Posterior cingulate gyrus (tissue), 11 donors: ENCODE measurements at regions of chr16 and their contacts with region 1.

Region 1: GRCh38 chr16:57519796-57520360 is 16.5 kb downstream of the CCDC102A start:
- DNase-seq: peak; percentile 67 to 97 (median 85)

Region 2: DNA sequence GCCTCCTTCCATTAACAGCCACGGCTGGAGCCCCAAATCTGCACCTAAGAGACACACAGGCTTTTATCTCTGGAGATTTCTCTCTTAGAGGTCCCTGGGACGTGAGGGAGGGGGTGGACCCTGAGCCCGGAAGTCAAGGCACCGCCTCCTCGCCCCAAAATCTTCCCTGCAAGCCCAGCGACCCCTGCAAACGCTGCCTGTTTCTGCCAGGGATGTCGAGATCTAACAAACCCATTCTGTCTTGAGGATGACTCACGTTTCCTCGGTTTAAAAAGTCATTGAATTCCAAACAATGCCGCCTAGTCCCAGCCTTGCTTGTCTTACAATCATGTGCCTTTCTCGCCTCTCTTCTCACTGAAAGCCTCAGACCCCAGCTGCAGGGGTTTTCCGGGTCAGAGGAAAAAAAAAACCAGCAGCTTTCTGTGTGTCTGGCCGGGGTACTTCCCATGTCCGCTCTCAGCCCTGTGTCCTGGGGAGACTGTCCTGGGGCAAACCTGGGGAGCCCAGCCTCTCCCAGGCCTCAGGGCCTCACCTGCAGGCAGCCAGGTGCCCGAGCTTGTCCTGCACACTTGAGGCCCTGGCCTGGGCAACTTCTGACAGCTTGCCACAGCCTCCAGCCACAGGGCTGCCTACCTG is 259.5 kb before region 1 on chr16:
- intact Hi-C with region 1: no loop called
- DNase-seq: peak in 6 of 10 donors; percentile 33 to 92 (median 58)

Region 3: DNA sequence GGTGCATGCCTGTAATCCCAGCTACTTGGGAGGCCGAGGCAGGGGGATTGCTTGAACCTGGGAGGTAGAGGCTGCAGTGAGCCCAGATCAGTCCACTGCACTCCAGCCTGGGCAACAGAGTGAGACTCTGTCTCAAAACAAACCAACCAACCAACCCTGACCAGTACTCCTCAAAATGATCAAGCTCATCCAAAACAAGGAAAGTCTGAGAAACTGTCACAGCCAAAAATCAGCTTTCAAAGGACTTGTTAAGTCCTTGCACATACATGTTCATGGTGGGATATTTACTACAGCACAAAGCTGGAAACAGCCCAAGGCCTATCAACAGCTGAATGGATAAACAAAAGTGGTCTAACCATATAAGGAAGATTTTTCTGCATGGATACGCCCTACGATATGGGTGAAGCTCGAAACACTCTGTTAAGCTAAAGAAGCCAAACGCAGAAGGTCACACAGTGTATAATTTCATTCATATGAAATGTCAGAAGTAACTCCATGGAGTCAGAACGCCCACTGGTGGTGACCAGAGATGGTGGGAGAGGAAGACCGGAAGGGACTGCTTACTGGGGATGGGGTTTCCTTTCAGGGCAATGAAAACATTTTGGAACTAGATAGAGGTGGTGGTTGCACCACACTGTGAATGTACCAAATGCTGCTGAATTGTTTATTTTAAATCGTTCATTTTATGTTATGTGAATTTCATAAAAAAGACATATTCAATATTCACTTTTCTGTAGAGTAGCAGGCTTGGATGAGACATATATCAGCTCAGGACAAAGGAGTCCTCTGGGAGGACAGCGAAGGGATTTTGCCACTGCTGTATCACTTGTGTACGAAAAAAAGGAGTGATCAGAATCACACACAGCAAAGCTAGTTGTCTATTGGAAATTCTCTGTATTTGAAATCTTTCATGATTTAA is 97.6 kb before region 1 on chr16:
- intact Hi-C with region 1: loop called (anchors 2 kb)
- DNase-seq: peak in 4 of 10 donors; percentile 26 to 75 (median 38)